Activated CD4-positive, alpha-beta memory T cell treated with anti-CD3 and anti-CD28 coated beads for 36 hours (primary cell): ENCODE measurements at regions of chr17 and their contacts with region 1.

Region 1: DNA sequence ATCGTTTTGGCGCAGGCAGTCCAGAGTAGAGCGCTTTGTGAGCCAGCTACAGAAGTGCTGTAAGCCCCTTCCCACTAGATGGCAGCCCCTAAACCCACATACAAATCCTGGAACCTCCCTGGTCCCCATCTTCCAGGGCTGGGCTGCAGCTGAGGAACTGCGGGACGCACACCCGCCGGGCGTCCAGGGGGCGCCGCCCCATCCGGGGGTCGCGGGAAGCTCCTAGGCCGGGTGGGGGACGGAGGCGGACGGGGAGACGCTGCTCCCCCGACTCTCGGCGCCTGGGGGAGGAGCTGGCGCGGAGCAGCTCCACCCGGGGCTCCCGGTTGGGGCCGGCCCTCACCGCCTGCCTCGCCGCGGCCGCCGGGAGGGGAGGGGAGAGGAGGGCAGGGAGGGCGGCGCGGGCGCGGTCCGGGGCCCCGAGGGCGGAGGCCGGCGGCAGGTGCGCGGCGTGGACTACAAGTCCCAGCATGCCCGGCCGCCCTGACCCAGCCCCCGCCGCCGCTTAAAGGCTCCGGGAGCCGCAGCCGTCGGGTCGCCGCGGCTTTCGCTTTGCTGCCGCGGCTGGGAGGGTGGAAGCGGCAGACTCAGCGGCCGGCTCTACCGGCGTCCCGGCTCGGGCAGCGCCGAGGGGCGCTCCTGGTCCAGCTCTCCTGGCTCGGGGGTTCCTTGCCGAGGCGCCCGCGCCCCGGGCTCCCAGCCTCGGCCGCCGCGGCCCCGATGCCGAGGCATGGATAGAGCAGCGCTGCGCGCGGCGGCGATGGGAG is at the start of gene KSR1:
- DNase-seq: peak; percentile 88
- H3K4me3 Mint-ChIP-seq: peak within 1 kb of the TSS; percentile 92
- H3K27ac Mint-ChIP-seq: peak within 1 kb of the TSS; percentile 80
- H3K4me1 Mint-ChIP-seq: peaks cover 40% of the 10 kb centered on the region
- H3K27me3 Mint-ChIP-seq: no peaks in the 10 kb centered on the region
- total RNA-seq, gene KSR1: 55.0 to 60.8 TPM

Region 2: DNA sequence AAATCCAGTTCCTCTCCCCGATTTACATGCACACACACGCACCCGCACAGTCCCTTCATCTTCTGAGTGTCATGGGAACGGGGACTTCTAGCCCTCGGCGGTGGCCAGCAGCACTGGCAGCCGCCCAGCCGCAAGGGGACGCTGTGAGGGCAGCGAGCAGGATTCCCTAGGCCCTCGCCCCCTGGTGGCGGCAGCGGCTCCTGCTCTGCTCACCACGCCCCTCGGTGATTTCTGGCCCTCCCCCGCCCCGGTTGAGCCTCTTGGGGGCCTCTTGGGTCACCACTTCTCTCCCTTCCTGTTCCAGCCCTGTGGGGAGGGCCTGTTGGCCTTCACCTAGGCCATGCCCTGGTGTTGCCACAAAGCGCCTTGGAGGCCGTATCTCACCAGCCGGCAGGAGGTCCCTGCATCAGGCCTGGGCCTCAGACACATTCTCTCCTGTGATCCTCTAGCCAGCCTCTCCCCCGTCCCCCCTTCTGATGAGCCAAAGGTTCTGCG is 75.0 kb before region 1 on chr17:
- CTCF ChIA-PET with region 1: interaction called, 3 read pairs
- POLR2A ChIA-PET with region 1: no interaction called
- intact Hi-C with region 1: loop called (anchors 5 kb)
- DNase-seq: peak; percentile 90
- H3K4me3 Mint-ChIP-seq: no peak overlapping the region
- H3K27ac Mint-ChIP-seq: no peak overlapping the region
- H3K4me1 Mint-ChIP-seq: peaks cover 3% of the 10 kb centered on the region
- H3K27me3 Mint-ChIP-seq: peaks cover 11% of the 10 kb centered on the region

Region 3: DNA sequence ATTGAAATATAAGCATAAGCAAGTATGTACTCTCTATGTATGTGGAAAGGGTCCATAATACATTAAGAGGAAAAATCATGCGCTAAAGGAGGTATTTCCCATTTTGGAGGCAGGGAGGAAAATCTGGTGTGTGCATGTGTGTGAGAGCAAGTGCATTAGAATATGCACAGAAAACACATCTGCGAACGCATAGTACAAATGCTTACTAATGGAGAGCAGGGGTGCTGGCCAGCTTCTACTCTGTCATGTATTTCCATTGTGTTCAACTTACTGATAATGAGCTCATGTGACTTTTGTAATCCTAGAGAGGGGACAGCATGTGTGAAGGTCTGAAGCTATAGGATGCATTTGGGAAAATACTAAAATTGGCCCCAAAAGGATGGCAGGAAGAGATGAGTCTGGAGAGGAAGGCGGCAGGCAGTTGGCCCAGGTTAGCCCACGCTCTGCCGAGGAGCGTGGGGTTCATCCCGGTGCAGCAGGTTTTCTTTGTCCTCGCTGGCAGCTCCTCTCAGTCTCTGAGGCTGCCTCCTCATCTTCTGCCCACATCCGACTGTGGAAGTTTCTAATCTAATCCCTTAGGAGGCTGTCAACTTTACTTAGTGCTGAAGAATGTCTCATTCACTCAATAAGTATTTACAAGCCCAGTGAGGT is 17.6 kb before region 1 on chr17:
- CTCF ChIA-PET with region 1: no interaction called
- POLR2A ChIA-PET with region 1: no interaction called
- intact Hi-C with region 1: no loop called
- DNase-seq: no peak
- H3K4me3 Mint-ChIP-seq: no peak overlapping the region
- H3K27ac Mint-ChIP-seq: no peak overlapping the region
- H3K4me1 Mint-ChIP-seq: peaks cover 2% of the 10 kb centered on the region
- H3K27me3 Mint-ChIP-seq: no peaks in the 10 kb centered on the region

Region 4: DNA sequence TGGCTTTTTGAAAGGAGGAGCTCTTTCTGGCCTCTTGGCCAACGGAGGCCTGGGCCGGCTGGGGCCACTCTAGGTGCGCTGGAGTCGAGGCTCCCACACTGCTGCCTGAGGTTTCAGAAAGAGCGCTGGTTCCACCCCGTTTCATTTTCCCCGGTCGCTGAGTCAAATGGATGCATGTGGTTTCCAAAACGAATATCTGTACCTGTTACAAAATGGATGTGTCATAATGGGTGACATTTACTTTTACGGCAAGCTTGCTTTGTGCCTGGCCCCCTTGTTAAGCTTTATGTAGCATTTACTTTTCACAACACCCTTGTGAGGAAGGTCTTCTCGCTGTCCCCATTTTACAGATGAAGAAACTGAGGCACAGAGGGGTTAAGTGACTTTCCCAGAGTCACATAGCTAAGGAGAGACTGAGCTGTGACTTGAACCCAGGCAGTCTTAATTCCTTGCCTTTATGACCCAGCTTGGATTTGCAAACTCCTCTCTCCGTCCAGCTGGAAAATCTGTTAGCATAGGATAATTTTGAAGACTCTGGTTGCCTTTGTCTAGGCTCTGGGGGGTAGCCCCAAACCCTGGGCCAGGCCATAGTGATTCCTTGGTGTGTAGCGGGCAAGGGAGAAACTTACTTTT is 10.8 kb after region 1 on chr17:
- CTCF ChIA-PET with region 1: interaction called, 14 read pairs
- POLR2A ChIA-PET with region 1: interaction called, 26 read pairs
- intact Hi-C with region 1: loop called (anchors 1 kb)
- DNase-seq: peak; percentile 93
- H3K4me3 Mint-ChIP-seq: peak overlapping the region; percentile 68
- H3K27ac Mint-ChIP-seq: peak overlapping the region; percentile 90
- H3K4me1 Mint-ChIP-seq: peaks cover 91% of the 10 kb centered on the region
- H3K27me3 Mint-ChIP-seq: no peaks in the 10 kb centered on the region

Region 5: DNA sequence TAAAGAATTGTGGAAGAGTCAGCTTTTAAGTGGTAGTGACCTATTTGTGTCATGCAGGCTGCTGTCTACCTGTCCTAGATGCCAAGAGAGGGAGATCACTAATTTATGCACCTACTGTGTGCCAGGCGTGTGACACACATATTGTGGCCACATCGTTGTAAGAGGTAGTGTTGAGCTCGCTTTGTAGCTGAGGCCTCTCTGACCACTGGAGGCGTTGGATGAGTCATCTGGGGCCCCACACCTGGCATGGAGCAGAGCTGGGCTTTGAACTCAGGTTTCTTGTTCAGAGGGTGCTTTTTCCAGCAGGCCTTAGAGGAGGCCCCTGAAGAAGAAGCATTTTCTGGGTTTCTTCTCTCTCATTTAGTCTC is 122.6 kb after region 1 on chr17:
- CTCF ChIA-PET with region 1: interaction called, 10 read pairs
- POLR2A ChIA-PET with region 1: interaction called, 3 read pairs
- intact Hi-C with region 1: no loop called
- DNase-seq: peak; percentile 90
- H3K4me3 Mint-ChIP-seq: no peak overlapping the region
- H3K27ac Mint-ChIP-seq: peak overlapping the region; percentile 84
- H3K4me1 Mint-ChIP-seq: peaks cover 64% of the 10 kb centered on the region
- H3K27me3 Mint-ChIP-seq: no peaks in the 10 kb centered on the region

Region 6: GRCh38 chr17:28193241-28193640 is 737.1 kb after region 1 on chr17:
- CTCF ChIA-PET with region 1: no interaction called
- POLR2A ChIA-PET with region 1: no interaction called
- intact Hi-C with region 1: no loop called
- DNase-seq: no peak
- H3K4me3 Mint-ChIP-seq: no peak overlapping the region
- H3K27ac Mint-ChIP-seq: no peak overlapping the region
- H3K4me1 Mint-ChIP-seq: no peaks in the 10 kb centered on the region
- H3K27me3 Mint-ChIP-seq: no peaks in the 10 kb centered on the region